IMR-90 (cell line): ENCODE measurements at regions of chr2 and their contacts with region 1.

Region 1: DNA sequence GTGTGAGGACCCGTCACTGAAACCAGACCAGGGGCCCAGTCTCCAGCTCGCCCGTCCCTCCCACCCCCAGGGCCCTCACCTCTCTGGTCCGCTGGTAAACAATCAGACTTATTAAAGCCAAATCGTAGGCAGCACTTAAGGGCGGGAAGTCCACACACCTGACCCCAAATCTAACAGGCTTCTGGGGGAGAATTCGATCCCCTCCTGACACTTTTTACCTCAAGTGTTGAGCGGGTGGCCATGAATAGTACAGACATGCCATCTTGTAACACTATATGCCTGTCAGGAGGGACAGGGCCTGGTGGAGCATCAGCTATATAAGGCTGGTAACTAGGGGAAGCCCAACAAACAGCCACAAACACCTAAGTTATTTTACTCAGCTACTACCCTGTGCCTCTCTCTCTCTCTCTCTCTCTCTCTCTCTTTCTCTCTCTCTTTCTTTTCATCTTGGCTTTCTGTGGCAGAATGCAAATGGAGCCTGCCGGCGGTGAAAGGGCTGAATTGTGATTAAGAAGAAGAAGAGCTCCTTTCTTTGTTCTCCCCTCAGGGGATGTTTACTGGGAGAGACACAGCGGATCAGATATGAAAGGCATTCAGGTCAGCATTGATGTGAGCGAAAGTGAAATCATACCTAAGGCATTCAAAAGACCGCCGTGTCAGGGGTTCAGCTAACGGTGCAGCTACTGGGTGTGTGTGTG is 9.5 kb downstream of the ZEB2 start:
- DNase-seq: peak; percentile 89
- ATAC-seq: peak; percentile 27
- H3K4me3 ChIP-seq: peak overlapping the region; percentile 9; the same call in 1 of the 2 replicates
- H3K27ac ChIP-seq: peak overlapping the region; percentile 60; the same call in 1 of the 2 replicates
- H3K4me1 ChIP-seq: peaks cover 32% of the 10 kb centered on the region
- H3K27me3 ChIP-seq: no peaks in the 10 kb centered on the region
- CTCF ChIP-seq: no peak
- POLR2A ChIP-seq: no peak
- RAD21 ChIP-seq: no peak

Region 2: GRCh38 chr2:143936848-143937722 is 573.4 kb before region 1 on chr2:
- CTCF ChIA-PET with region 1: no interaction called
- POLR2A ChIA-PET with region 1: no interaction called
- dilution Hi-C with region 1: no loop called
- in situ Hi-C with region 1: no loop called
- intact Hi-C with region 1: loop called (anchors 5 kb)
- DNase-seq: peak; percentile 31
- ATAC-seq: peak; percentile 75
- H3K4me3 ChIP-seq: peak overlapping the region; percentile 61
- H3K27ac ChIP-seq: peak overlapping the region; percentile 61
- H3K4me1 ChIP-seq: peaks cover 14% of the 10 kb centered on the region
- H3K27me3 ChIP-seq: no peaks in the 10 kb centered on the region
- CTCF ChIP-seq: no peak
- POLR2A ChIP-seq: no peak
- RAD21 ChIP-seq: no peak

Region 3: GRCh38 chr2:143974262-143974661 is 536.2 kb before region 1 on chr2:
- CTCF ChIA-PET with region 1: no interaction called
- POLR2A ChIA-PET with region 1: no interaction called
- dilution Hi-C with region 1: no loop called
- in situ Hi-C with region 1: no loop called
- intact Hi-C with region 1: no loop called
- DNase-seq: peak; percentile 85
- ATAC-seq: peak; percentile 53
- H3K4me3 ChIP-seq: no peak overlapping the region
- H3K27ac ChIP-seq: no peak overlapping the region
- H3K4me1 ChIP-seq: peaks cover 2% of the 10 kb centered on the region; the same call in 1 of the 2 replicates
- H3K27me3 ChIP-seq: no peaks in the 10 kb centered on the region
- CTCF ChIP-seq: no peak
- POLR2A ChIP-seq: no peak
- RAD21 ChIP-seq: no peak

Region 4: GRCh38 chr2:144084114-144084661 is 426.3 kb before region 1 on chr2:
- CTCF ChIA-PET with region 1: no interaction called
- POLR2A ChIA-PET with region 1: no interaction called
- dilution Hi-C with region 1: no loop called
- in situ Hi-C with region 1: no loop called
- intact Hi-C with region 1: loop called (anchors 5 kb)
- DNase-seq: peak; percentile 84
- ATAC-seq: peak; percentile 65
- H3K4me3 ChIP-seq: no peak overlapping the region
- H3K27ac ChIP-seq: peak overlapping the region; percentile 99
- H3K4me1 ChIP-seq: peaks cover 18% of the 10 kb centered on the region; the same call in 1 of the 2 replicates
- H3K27me3 ChIP-seq: no peaks in the 10 kb centered on the region
- CTCF ChIP-seq: no peak
- POLR2A ChIP-seq: no peak
- RAD21 ChIP-seq: no peak

Region 5: DNA sequence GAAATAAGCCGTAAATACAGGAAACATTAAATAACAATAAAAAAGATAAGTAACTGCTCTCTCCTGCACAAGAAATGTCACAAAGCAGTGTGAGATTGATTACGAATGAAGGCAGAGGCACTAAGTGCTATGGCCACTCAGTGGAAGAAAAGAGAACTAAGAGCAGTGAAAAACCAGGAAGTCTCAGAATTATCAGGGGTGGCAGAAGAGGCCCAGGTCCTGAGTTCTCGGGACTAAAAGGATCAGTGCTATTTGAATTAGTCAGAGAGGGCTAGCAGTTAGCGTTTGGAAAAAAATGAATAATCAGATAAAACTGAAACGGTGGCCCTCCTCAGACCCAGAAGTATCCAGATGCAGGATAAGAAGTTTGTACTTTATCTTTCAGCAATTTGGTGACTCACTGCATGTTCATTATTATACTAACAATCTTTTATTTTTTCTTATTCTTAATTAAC is 357.6 kb before region 1 on chr2:
- CTCF ChIA-PET with region 1: no interaction called
- POLR2A ChIA-PET with region 1: no interaction called
- dilution Hi-C with region 1: no loop called
- in situ Hi-C with region 1: no loop called
- intact Hi-C with region 1: loop called (anchors 5 kb)
- DNase-seq: peak; percentile 82
- ATAC-seq: peak; percentile 95
- H3K4me3 ChIP-seq: no peak overlapping the region
- H3K27ac ChIP-seq: peak overlapping the region; percentile 79
- H3K4me1 ChIP-seq: peaks cover 2% of the 10 kb centered on the region
- H3K27me3 ChIP-seq: no peaks in the 10 kb centered on the region
- CTCF ChIP-seq: 0 out of 2 replicates have a peak, but pooled peaks have one; percentile 5
- POLR2A ChIP-seq: no peak
- RAD21 ChIP-seq: peak; percentile 3; the same call in 1 of the 2 replicates

Region 6: GRCh38 chr2:144402251-144402650 is 108.2 kb before region 1 on chr2:
- CTCF ChIA-PET with region 1: no interaction called
- POLR2A ChIA-PET with region 1: no interaction called
- dilution Hi-C with region 1: no loop called
- in situ Hi-C with region 1: no loop called
- intact Hi-C with region 1: loop called (anchors 5 kb)
- DNase-seq: peak; percentile 37
- ATAC-seq: peak; percentile 66
- H3K4me3 ChIP-seq: no peak overlapping the region
- H3K27ac ChIP-seq: peak overlapping the region; percentile 71; the same call in 1 of the 2 replicates
- H3K4me1 ChIP-seq: peaks cover 12% of the 10 kb centered on the region
- H3K27me3 ChIP-seq: no peaks in the 10 kb centered on the region
- CTCF ChIP-seq: no peak
- POLR2A ChIP-seq: no peak
- RAD21 ChIP-seq: no peak

Region 7: GRCh38 chr2:144424559-144425240 is 85.7 kb before region 1 on chr2:
- CTCF ChIA-PET with region 1: no interaction called
- POLR2A ChIA-PET with region 1: no interaction called
- dilution Hi-C with region 1: no loop called
- in situ Hi-C with region 1: no loop called
- intact Hi-C with region 1: no loop called
- DNase-seq: no peak
- ATAC-seq: no peak
- H3K4me3 ChIP-seq: no peak overlapping the region
- H3K27ac ChIP-seq: no peak overlapping the region
- H3K4me1 ChIP-seq: peaks cover 3% of the 10 kb centered on the region
- H3K27me3 ChIP-seq: no peaks in the 10 kb centered on the region
- CTCF ChIP-seq: no peak
- POLR2A ChIP-seq: no peak
- RAD21 ChIP-seq: no peak

Region 8: GRCh38 chr2:144801766-144802165 is 291.3 kb after region 1 on chr2:
- CTCF ChIA-PET with region 1: no interaction called
- POLR2A ChIA-PET with region 1: no interaction called
- dilution Hi-C with region 1: no loop called
- in situ Hi-C with region 1: no loop called
- intact Hi-C with region 1: no loop called
- DNase-seq: peak; percentile 89
- ATAC-seq: peak; percentile 88
- H3K4me3 ChIP-seq: no peak overlapping the region
- H3K27ac ChIP-seq: no peak overlapping the region
- H3K4me1 ChIP-seq: peaks cover 5% of the 10 kb centered on the region
- H3K27me3 ChIP-seq: no peaks in the 10 kb centered on the region
- CTCF ChIP-seq: no peak
- POLR2A ChIP-seq: no peak
- RAD21 ChIP-seq: no peak